Activated naive CD4-positive, alpha-beta T cell treated with anti-CD3 and anti-CD28 coated beads for 36 hours (primary cell): ENCODE measurements at regions of chr22 and their contacts with region 1.

Region 1: GRCh38 chr22:26672590-26673468 is 15.4 kb downstream of the MIAT start:
- DNase-seq: peak; percentile 98
- H3K4me3 Mint-ChIP-seq: peak overlapping the region; percentile 95
- H3K27ac Mint-ChIP-seq: peak overlapping the region; percentile 100
- H3K4me1 Mint-ChIP-seq: peaks cover 71% of the 10 kb centered on the region
- H3K27me3 Mint-ChIP-seq: no peaks in the 10 kb centered on the region

Region 2: DNA sequence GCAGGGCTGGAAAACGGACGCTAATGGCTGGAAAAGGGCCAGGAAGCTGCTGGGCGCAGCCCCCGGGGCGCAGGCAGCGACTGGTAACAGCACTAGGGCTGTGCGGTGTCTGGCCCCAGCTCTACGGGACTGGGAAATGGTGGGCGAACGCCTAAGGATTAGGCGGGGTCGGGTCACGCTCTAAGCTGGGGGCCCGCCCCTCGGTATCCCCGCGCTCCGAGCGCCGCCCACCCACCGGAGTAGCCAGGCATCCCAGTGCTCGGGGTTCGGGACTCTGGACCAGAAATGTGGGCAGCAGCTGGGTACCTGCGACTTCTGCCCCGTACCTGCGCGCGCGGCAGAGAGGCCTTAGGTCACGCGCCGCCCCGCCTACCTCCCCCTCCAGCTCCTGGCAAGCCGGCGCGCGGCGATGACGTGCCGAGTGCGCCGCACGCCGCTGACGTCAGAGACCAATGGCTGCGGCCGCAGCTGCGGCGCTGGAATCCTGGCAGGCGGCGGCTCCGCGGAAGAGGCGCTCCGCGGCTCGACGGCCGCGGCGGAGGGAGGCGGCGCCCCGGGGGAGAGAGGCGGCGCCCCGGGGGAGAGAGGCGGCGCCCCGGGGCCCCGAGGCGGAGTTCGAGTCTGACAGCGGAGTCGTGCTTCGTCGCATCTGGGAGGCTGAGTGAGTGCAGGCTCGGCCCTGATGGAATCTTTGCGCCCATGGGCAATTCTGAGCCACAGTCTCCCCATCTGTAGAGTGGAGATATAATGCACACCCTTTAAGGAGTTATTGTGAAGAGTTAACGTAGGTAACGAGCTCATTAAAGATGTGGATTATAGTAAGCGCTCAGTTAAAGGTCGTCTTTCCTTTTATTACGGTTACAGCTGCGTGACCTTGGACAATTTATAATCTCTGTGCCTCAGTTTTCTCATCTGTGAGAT is 189.1 kb before region 1 on chr22 and contains the starts of genes HPS4 and SRRD:
- CTCF ChIA-PET with region 1: interaction called, 4 read pairs
- intact Hi-C with region 1: loop called (anchors 1 kb)
- DNase-seq: peak; percentile 90
- H3K4me3 Mint-ChIP-seq: peak within 1 kb of the TSS; percentile 82
- H3K27ac Mint-ChIP-seq: peak within 1 kb of the TSS; percentile 84
- H3K4me1 Mint-ChIP-seq: peaks cover 59% of the 10 kb centered on the region
- H3K27me3 Mint-ChIP-seq: no peaks in the 10 kb centered on the region
- total RNA-seq, gene HPS4: 48.0 to 51.5 TPM
- total RNA-seq, gene SRRD: 20.8 to 21.6 TPM

Region 3: DNA sequence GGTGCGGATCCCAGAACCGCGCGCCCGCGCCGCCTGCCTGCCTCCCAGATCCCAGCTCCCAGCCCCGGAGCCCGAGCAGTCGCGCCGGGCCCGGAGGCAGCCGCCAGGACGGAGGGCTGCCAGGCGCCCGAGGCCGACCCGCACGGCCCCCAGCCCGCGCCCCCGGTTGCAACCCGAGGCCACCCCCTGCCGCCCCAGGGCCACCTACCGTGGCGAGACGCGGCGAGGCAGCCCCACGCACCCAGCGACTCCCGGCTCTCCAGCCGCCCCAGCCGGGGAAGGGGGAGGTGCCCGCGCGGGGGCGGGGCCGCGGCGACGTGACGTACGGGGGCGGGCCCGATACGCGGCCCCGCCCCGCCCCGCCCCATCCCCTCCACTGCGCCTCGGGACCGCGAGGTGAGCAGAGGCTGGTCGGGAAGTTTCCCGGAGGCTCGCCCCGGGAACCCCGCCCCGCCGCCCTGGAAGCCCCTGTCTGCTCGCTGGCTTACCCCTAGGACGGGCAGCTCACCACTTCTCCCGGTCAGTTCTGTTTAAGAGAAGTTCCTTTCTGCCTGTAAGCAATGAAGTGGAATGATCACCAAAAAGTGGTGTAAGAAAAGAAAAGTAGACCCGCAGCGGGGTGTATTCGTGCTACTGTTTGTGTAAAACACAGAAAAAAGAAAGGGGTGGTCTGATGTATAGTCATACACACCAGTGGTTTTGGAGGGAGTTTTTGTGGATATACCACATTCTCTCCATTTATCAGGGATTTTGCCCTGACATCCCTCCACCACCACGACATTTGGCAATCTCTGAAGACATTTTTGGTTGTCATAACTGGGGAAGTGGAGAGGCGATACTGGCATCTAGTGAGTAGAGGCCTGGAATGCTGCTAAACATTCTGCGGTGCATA is 82.7 kb before region 1 on chr22 and contains the start of gene TPST2:
- CTCF ChIA-PET with region 1: no interaction called
- intact Hi-C with region 1: loop called (anchors 1 kb)
- DNase-seq: peak; percentile 72
- H3K4me3 Mint-ChIP-seq: peak within 1 kb of the TSS; percentile 85
- H3K27ac Mint-ChIP-seq: peak within 1 kb of the TSS; percentile 67
- H3K4me1 Mint-ChIP-seq: peaks cover 49% of the 10 kb centered on the region
- H3K27me3 Mint-ChIP-seq: no peaks in the 10 kb centered on the region
- total RNA-seq, gene TPST2: 21.0 to 21.9 TPM

Region 4: GRCh38 chr22:26658671-26659478 is 14.0 kb before region 1 on chr22:
- CTCF ChIA-PET with region 1: interaction called, 7 read pairs
- intact Hi-C with region 1: loop called (anchors 1 kb)
- DNase-seq: peak; percentile 95
- H3K4me3 Mint-ChIP-seq: peak overlapping the region; percentile 90
- H3K27ac Mint-ChIP-seq: peak overlapping the region; percentile 80
- H3K4me1 Mint-ChIP-seq: peaks cover 26% of the 10 kb centered on the region
- H3K27me3 Mint-ChIP-seq: peaks cover 2% of the 10 kb centered on the region

Region 5: GRCh38 chr22:26835929-26836528 is 163.2 kb after region 1 on chr22:
- CTCF ChIA-PET with region 1: no interaction called
- intact Hi-C with region 1: no loop called
- DNase-seq: peak; percentile 80
- H3K4me3 Mint-ChIP-seq: no peak overlapping the region
- H3K27ac Mint-ChIP-seq: no peak overlapping the region
- H3K4me1 Mint-ChIP-seq: no peaks in the 10 kb centered on the region
- H3K27me3 Mint-ChIP-seq: no peaks in the 10 kb centered on the region